PC-9 (cell line): ENCODE measurements at regions of chr10 and their contacts with region 1.

Region 1: GRCh38 chr10:63629363-63630084 is 108.3 kb downstream of the REEP3 start:
- DNase-seq: peak; percentile 94 to 97
- H3K4me3 ChIP-seq: peak overlapping the region; percentile 76
- H3K27ac ChIP-seq: peak overlapping the region; percentile 78
- H3K4me1 ChIP-seq: peaks cover 24% of the 10 kb centered on the region
- H3K27me3 ChIP-seq: no peaks in the 10 kb centered on the region
- CTCF ChIP-seq: peak; percentile 86

Region 2: DNA sequence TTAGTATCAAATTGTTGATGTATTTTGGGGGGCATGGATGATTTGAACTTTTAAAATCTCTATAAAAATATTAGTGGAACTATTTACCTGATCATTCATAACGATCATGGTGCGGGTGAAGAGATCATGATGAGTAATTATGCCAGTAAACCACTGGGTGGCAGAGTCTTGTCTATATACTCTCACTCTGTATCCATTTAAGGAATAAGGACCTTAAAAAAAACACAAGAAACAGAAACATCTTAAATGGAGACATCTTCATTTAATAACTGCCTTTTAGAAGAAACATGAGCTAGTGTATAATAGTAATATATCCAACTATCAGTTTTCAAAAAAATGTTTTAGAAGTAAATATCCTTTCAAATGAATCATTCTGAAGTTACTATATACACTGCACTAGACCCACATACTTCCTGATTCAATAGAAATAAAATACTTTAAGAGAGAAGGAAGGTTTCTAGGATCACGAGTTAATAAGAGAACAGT is 412.4 kb before region 1 on chr10:
- CTCF ChIA-PET with region 1: interaction called, 9 read pairs
- POLR2A ChIA-PET with region 1: interaction called, 3 read pairs
- intact Hi-C with region 1: loop called (anchors 1 kb)
- DNase-seq: peak in 1 of 2 experiments; percentile 64
- H3K4me3 ChIP-seq: no peak overlapping the region
- H3K27ac ChIP-seq: peak overlapping the region; percentile 0; the same call in 1 of the 2 replicates
- H3K4me1 ChIP-seq: no peaks in the 10 kb centered on the region
- H3K27me3 ChIP-seq: no peaks in the 10 kb centered on the region
- CTCF ChIP-seq: peak; percentile 91

Region 3: GRCh38 chr10:63268798-63269503 is 360.6 kb before region 1 on chr10:
- CTCF ChIA-PET with region 1: no interaction called
- POLR2A ChIA-PET with region 1: interaction called, 7 read pairs
- intact Hi-C with region 1: loop called (anchors 1 kb)
- DNase-seq: peak; percentile 82 to 96
- H3K4me3 ChIP-seq: peak overlapping the region; percentile 71
- H3K27ac ChIP-seq: peak overlapping the region; percentile 96
- H3K4me1 ChIP-seq: peaks cover 34% of the 10 kb centered on the region
- H3K27me3 ChIP-seq: no peaks in the 10 kb centered on the region
- CTCF ChIP-seq: peak; percentile 25; the same call in 1 of the 2 replicates

Region 4: GRCh38 chr10:63323701-63324494 is 305.6 kb before region 1 on chr10:
- CTCF ChIA-PET with region 1: no interaction called
- POLR2A ChIA-PET with region 1: no interaction called
- intact Hi-C with region 1: no loop called
- DNase-seq: no peak
- H3K4me3 ChIP-seq: no peak overlapping the region
- H3K27ac ChIP-seq: no peak overlapping the region
- H3K4me1 ChIP-seq: no peaks in the 10 kb centered on the region
- H3K27me3 ChIP-seq: no peaks in the 10 kb centered on the region
- CTCF ChIP-seq: no peak

Region 5: DNA sequence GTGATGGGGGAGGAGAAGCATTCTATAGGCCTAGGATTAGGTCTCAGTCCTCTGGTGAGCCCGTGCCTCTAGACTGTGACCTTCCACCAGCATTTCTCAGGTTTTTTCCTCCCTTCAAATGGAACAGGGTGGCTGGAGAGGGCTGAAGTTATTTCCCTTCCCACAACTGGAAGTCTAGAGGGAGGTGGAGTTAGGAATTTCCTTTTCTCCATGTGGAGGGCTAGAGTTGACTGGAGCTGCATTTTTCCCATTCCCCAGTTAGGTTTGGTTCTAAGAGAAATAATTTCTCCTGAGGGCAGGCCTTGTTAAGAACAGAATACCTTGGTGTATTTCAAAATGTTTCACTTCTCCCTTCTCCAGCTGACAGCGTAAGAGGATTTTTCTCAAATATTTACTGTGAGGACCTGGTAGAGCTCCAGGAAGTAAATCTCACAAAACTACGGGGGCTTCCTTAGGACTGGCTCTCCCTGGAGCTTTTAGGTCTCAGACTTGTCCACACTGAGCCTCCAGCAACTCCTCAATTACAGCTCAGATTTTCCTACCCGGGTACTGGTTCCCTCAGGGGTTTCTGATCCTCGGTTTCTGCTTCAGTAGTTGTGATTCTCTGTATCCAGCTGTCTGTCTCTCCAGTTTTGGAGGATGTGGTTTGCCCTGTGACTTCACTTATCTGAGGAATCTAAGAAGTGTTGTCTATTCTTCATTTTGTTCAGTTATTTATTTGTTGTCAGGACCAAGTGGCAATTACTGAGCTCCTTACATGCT is 114.3 kb before region 1 on chr10:
- CTCF ChIA-PET with region 1: interaction called, 4 read pairs
- POLR2A ChIA-PET with region 1: interaction called, 4 read pairs
- intact Hi-C with region 1: loop called (anchors 2 kb)
- DNase-seq: peak; percentile 47 to 48
- H3K4me3 ChIP-seq: no peak overlapping the region
- H3K27ac ChIP-seq: peak overlapping the region; percentile 46
- H3K4me1 ChIP-seq: peaks cover 38% of the 10 kb centered on the region
- H3K27me3 ChIP-seq: no peaks in the 10 kb centered on the region
- CTCF ChIP-seq: no peak

Region 6: DNA sequence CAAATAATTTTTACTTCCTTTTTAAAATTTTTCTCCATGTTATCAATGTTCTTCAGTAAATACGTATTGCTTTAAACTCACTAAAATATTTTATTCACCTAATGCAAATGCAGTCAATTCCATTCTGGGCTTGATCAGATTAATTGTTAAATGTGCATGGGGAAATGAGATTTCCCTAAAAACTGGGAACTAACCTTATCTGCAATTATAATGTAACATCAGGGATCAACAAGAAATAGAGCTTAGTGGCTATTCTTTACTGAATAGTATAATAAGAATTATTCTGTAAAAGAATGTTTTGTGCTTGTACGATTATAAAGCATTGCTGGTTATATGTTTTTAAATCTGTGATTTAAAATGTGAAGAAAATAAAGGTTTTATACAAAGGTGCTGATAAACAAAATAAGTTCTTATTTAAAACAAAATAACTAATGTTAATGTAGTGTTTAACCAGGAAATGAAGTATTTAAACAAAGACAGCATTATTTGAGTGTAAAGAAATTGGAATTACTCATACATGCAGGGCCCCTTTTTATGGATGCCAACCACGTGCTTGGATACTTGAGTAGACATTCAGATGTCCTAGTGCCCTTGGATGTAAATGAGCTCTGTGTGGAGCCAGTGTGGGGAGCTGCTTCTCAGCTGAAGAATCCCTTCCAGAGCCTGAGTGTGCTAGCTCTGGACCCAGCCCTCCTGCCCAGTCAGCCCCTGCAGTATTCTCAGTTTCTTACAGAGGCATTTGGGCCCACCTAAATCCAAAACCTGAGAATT is 24.1 kb before region 1 on chr10:
- CTCF ChIA-PET with region 1: no interaction called
- POLR2A ChIA-PET with region 1: no interaction called
- intact Hi-C with region 1: no loop called
- DNase-seq: no peak
- H3K4me3 ChIP-seq: no peak overlapping the region
- H3K27ac ChIP-seq: no peak overlapping the region
- H3K4me1 ChIP-seq: no peaks in the 10 kb centered on the region
- H3K27me3 ChIP-seq: no peaks in the 10 kb centered on the region
- CTCF ChIP-seq: no peak

Region 7: DNA sequence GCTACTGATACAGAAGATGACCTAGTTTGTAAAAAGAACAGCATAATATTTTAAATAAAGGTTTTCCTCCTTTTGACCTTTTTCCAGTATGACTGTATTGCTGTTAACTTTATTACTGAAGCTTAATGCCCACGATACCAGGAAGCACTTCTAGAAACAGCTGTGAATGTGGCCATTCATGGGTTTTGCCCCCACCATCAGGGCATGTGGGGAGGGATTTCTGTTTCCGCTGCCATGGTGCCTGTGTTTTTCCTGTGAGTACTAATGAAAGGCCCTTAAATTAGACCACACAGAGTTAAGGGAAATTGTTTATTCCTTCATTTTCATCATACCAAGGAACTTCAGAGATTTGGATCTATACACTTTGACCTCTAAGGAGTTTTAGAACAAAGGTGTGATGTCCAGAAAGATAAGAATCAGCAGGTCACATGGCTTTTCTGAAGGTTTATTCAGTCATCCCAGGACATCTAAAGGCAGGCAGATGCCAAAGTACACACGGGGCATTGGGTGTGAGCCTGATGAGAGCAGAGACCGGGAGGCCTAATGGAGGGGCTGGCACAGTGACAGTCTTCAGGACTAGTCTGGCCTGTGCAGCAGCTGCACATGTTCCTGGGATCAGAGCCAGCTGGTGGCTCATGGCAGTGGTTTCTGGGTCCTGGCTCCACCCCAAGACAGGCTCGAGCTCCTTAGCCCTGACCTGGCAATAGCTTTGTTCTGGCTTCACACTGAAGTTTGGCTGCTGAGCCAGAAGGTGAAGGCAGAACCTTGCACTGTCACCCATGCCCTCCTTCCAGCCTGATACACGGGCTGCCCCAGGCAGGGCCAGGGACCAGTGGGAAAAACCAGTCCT is 82.6 kb after region 1 on chr10:
- CTCF ChIA-PET with region 1: interaction called, 8 read pairs
- POLR2A ChIA-PET with region 1: interaction called, 19 read pairs
- intact Hi-C with region 1: loop called (anchors 1 kb)
- DNase-seq: peak; percentile 98 to 99
- H3K4me3 ChIP-seq: no peak overlapping the region
- H3K27ac ChIP-seq: peak overlapping the region; percentile 53
- H3K4me1 ChIP-seq: peaks cover 39% of the 10 kb centered on the region
- H3K27me3 ChIP-seq: no peaks in the 10 kb centered on the region
- CTCF ChIP-seq: no peak